H1 (cell line): ENCODE measurements at regions of chr3 and their contacts with region 1.

Region 1: DNA sequence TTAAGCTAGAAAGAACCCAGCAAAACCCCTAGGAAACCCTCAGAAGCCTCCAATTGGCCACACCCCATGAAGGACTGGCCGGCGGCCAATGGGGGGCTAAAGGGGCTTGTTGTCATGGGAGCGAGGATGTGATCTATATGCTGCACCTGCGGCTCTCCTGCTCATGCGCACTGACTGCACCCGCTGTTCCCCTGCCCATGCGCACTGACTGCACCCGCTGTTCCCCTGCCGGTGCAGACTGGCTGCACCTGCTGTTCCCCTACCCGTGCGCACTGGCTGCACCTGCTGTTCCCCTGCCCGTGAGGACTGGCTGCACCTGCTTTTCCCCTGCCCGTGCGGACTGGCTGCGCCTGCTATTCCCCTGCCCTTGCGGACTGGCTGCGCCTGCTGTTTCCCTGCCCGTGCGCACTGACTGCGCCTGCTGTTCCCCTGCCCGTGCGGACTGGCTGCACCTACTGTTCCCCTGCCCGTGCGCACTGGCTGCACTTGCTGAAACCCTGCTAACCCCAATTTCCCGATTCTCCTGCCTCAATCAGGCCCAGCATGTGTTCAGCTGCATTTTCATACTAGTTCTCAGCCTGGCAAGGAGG is 16.8 kb upstream of the MCCC1 start:
- DNase-seq: peak; percentile 90 to 91
- H3K4me3 ChIP-seq: peak overlapping the region; percentile 23 to 60 (median 54)
- H3K27ac ChIP-seq: no peak overlapping the region
- H3K4me1 ChIP-seq: peaks cover 10 to 17% (median 14%) of the 10 kb centered on the region in 4 experiments
- H3K27me3 ChIP-seq: peaks cover 0 to 8% (median 5%) of the 10 kb centered on the region in 4 experiments; a peak in 3 of 7 replicates
- CTCF ChIP-seq: no peak
- EP300 ChIP-seq: peak in 1 of 2 experiments; percentile 75; a peak in 1 of 3 replicates
- POLR2A ChIP-seq: no peak
- RAD21 ChIP-seq: no peak

Region 2: DNA sequence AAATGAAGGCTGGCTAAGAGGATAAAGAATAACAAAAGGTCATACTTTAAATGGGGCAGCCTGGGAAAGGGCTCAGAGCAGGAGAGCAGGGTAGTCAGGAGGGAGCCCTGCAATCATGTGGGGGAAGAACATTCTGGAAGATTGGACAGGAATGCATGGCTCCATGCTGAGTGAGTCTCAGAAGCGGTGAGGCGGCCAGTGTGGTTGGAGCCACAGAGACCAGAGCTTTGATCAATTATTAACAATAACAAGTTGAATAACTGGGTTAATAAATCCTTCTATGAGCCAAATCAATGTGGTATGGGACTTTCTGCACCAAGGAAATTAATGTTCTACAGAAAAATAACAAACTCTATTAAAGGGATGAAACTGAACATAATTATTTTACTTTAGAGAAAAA is 77.9 kb before region 1 on chr3:
- CTCF ChIA-PET with region 1: no interaction called
- POLR2A ChIA-PET with region 1: no interaction called
- DNase-seq: no peak
- H3K4me3 ChIP-seq: no peak overlapping the region
- H3K27ac ChIP-seq: no peak overlapping the region
- H3K4me1 ChIP-seq: peaks cover 0 to 3% (median 0%) of the 10 kb centered on the region in 4 experiments; a peak in 1 of 7 replicates
- H3K27me3 ChIP-seq: no peaks in the 10 kb centered on the region
- CTCF ChIP-seq: no peak
- EP300 ChIP-seq: no peak
- POLR2A ChIP-seq: no peak
- RAD21 ChIP-seq: no peak

Region 3: DNA sequence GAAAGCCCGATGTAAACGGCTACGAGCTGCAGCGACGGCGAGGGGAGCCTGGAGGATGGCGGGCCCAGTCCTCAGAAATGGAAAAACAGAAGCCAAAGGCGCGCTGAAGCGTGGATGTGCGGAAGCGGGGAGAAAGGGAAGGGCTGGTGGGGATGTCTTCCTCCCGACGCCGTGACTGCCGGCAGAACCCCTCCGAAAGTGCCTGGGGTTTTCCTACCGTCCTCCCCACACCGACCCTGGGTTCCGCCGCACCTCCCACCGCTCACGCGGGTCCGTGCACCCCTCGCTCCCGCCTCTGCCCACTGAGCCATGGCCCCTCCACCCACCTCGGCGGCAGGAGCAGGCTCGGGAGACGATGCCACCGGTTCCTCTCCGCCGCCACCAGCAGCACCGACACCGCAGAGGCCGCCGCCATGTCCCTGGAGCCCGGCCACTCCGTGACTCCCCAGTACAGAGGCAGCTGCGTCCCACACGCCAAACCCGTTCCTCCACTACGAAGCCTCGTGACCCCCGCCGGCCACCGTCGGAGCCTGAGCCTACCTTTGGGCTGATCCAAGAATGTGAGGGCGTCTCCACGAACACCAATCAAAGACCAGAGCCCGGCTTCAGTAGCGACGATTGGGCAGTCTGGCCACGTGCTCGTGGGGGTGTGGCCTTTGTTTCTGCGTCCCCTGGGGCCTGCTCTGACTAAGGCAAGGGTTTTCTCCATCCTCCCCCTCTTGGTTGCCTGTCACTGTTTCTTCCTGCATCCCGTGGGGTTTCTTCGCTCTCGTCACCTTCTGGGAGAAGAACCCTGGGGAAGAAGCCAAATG is 16.9 kb before region 1 on chr3 and contains the start of gene MCCC1:
- CTCF ChIA-PET with region 1: interaction called, 10 read pairs
- POLR2A ChIA-PET with region 1: interaction called, 15 read pairs
- DNase-seq: peak; percentile 97 to 98
- H3K4me3 ChIP-seq: peak within 1 kb of the TSS; percentile 83 to 93 (median 86)
- H3K27ac ChIP-seq: peak within 1 kb of the TSS; percentile 74
- H3K4me1 ChIP-seq: no peaks in the 10 kb centered on the region; a peak in 2 of 7 replicates
- H3K27me3 ChIP-seq: no peaks in the 10 kb centered on the region
- CTCF ChIP-seq: no peak
- EP300 ChIP-seq: peak in 1 of 2 experiments; percentile 50; a peak in 1 of 3 replicates
- POLR2A ChIP-seq: peak; percentile 56 to 94
- RAD21 ChIP-seq: no peak
- total RNA-seq, gene MCCC1: 21.5 and 24.6 TPM in 2 replicates